Right cardiac atrium (tissue), 5 donors: ENCODE measurements at regions of chr19 and their contacts with region 1.

Region 1: DNA sequence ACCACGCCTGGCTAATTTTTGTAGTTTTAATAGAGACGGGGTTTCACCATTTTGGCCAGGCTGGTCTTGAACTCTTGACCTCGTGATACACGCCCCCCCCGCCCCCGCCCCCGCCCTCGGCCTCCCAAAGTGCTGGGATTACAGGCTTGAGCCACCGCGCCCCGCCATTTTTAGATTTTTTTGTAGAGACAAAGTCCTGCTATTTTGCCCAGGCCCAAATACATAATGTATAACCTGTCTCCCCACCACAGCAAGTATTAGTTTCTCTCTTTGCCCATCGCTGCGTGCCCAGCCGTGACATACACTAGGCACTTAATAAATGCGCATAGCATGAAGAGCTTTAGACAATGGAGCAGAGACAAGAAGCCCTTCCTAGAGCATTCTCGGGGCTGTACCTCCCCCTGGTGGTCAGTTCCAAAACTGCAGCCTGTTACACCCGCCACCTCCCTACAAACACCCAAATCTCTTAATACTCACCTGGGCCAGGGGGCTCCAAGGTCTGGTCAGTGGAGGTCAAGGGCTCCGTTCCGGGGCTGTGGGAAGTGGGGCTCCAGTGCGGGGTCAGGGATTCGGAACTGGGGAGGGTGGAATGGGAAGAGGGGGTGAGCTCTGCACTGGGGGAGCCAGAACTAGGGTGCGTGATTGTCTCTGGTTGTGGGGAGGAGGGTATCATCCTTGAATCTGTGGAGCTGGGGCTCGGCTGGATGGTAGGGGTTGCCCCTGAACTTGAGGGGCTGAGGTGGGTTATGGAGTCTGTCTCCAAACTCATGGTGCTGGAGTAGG is 22.5 kb downstream of the IQCN start:
- DNase-seq: peak; percentile 66 to 83 (median 83)
- ATAC-seq: peak; percentile 62 to 66
- H3K4me3 ChIP-seq: no peak overlapping the region
- H3K27ac ChIP-seq: no peak overlapping the region
- H3K4me1 ChIP-seq: no peaks in the 10 kb centered on the region
- H3K27me3 ChIP-seq: no peaks in the 10 kb centered on the region

Region 2: DNA sequence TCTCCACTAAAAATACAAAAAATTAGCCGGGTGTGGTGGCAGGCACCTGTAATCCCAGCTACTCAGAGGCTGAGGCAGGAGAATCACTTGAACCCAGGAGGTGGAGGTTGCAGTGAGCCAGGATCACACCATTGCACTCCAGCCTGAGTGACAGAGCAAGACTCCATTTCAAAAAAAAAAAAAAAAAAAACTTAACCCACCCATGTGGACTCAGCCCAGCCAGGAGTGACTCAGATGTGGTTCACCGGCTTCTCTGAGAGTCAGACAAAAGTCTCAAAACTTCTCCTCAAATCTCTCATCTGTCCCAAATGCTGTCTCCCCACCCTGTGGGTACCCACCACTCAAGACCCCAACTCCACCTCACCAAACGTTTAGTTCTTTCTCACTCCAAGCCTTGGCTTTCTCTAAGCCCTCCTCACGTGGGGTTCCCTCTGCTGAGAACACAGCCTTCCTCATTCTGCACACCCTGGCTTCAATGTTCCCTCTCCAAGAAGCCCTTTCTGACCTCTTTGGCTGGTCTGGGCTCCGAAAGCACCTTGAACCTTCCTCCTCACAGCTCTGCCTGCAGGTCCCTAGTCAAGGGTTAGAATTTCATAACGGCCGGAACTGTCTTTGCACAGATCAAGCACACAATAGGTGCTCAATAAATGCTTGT is 36.9 kb before region 1 on chr19:
- intact Hi-C with region 1: loop called in 2 of 4 experiments (anchors 5 kb)
- DNase-seq: no peak
- ATAC-seq: no peak
- H3K4me3 ChIP-seq: no peak overlapping the region
- H3K27ac ChIP-seq: no peak overlapping the region
- H3K4me1 ChIP-seq: no peaks in the 10 kb centered on the region
- H3K27me3 ChIP-seq: no peaks in the 10 kb centered on the region